ENCODE measurements at regions of chr2 and their contacts with region 1.

Region 1: DNA sequence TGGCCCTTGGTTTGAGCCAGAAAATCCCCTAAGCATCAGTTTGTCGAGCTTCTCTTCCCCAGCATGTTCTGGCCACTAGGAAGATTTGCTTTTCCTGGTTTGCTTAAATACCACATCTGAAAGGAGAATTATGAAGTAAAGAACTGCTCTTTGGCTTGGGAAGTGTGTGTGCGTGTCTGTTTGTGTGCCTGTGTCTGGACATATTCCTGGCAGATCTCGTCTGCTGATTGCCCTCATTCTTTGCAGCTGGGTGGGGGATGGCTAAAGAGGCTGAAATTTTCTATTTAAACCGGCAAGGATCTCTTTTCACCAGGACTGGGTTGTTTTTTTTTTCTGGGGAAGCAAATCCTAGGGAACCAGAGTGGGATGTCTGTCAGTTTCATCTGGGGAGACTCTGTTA is 57.3 kb upstream of the MBOAT2 start:
- DNase-seq: no peak
- ATAC-seq: no peak

Region 2: DNA sequence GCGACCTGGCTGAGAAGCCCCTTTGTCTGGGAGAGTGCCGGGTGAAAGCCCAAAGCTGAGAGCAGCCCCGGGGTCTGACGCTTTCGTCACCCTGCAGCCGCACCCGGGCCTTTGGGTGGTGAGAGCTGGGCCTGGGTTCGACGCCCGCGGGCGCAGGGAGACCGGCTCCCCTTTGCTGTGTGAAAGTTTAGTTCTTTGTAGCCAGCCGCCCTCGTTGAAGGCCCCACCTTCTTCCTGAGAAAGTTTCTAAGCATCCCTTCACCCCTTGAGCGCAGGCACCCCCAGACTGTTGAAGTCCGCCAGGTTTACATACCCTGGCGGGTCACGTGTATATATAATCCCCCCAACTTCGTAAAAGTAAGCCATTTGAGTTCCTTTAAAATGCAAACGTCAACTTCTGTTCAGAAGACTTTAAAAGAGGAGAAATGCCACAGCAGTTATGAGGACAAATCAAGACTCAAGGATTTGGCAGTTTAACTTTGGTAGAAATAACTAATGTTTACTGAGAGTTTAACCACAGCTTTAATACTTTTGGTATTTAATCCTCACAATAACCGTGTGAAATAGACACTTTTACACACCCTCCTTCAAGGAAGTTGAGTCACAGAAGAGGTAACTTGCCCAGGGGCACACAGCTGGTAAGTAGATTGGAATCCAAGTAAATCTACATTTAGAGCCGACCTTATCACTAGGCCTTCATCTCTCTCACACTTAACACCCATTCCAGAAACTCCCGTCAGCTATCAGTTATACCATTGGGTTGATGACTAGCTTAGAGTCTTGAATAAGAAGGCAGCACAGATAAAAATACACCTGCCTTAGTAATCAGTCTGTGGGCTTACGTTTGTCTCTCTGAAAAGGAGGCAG is 56.2 kb before region 1 on chr2:
- intact Hi-C with region 1: no loop called
- DNase-seq: no peak
- ATAC-seq: no peak

Region 3: GRCh38 chr2:9089831-9090230 is 29.0 kb after region 1 on chr2:
- intact Hi-C with region 1: loop called (anchors 1 kb)
- DNase-seq: no peak
- ATAC-seq: no peak

Region 4: GRCh38 chr2:9308186-9308955 is 247.6 kb after region 1 on chr2:
- intact Hi-C with region 1: no loop called
- DNase-seq: no peak
- ATAC-seq: no peak